ENCODE measurements at regions of chr12 and their contacts with region 1.

Region 1: DNA sequence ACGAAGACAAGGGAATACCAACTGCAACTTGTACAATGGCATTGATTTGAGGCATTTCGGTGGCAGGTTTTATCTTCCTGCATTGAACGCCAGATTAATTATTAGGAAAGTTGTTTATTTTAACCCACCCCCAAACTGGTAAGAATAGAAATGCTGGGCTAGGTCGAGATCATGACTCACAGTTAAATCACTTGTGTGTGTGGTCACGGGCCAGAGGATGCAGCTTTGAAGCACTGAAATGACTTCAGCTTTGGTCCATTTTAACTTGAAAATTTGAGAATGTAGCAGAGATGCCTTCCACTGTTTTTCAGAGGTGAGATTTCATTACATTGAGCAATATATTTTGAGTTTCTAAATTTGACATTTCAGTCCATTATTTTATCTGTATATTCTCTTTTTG is 23.6 kb upstream of the KCNH3 start:
- DNase-seq: peak; percentile 66
- H3K27ac ChIP-seq: peak overlapping the region; percentile 59
- CTCF ChIP-seq: no peak

Region 2: GRCh38 chr12:49347384-49348237 is 167.7 kb before region 1 on chr12:
- CTCF ChIA-PET with region 1: interaction called, 20 read pairs
- POLR2A ChIA-PET with region 1: interaction called, 3 read pairs
- DNase-seq: peak; percentile 84
- H3K27ac ChIP-seq: no peak overlapping the region; the same call in 1 of the 2 replicates
- CTCF ChIP-seq: peak; percentile 96

Region 3: GRCh38 chr12:49543914-49544815 is 28.9 kb after region 1 on chr12:
- CTCF ChIA-PET with region 1: no interaction called
- POLR2A ChIA-PET with region 1: no interaction called
- DNase-seq: no peak
- H3K27ac ChIP-seq: no peak overlapping the region
- CTCF ChIP-seq: no peak

Region 4: GRCh38 chr12:49707128-49707811 is 192.0 kb after region 1 on chr12 and contains the start of gene FMNL3:
- CTCF ChIA-PET with region 1: no interaction called
- POLR2A ChIA-PET with region 1: no interaction called
- DNase-seq: peak; percentile 99
- H3K27ac ChIP-seq: peak within 1 kb of the TSS; percentile 80
- CTCF ChIP-seq: peak; percentile 96

Measured in RWPE1 (cell line).